Activated naive CD4-positive, alpha-beta T cell treated with anti-CD3 and anti-CD28 coated beads for 36 hours (primary cell): ENCODE measurements at regions of chr11 and their contacts with region 1.

Region 1: GRCh38 chr11:111586388-111586831 is 15.8 kb upstream of the SIK2 start:
- DNase-seq: peak; percentile 69
- H3K4me3 Mint-ChIP-seq: no peak overlapping the region
- H3K27ac Mint-ChIP-seq: no peak overlapping the region
- H3K4me1 Mint-ChIP-seq: no peaks in the 10 kb centered on the region
- H3K27me3 Mint-ChIP-seq: peaks cover 2% of the 10 kb centered on the region

Region 2: DNA sequence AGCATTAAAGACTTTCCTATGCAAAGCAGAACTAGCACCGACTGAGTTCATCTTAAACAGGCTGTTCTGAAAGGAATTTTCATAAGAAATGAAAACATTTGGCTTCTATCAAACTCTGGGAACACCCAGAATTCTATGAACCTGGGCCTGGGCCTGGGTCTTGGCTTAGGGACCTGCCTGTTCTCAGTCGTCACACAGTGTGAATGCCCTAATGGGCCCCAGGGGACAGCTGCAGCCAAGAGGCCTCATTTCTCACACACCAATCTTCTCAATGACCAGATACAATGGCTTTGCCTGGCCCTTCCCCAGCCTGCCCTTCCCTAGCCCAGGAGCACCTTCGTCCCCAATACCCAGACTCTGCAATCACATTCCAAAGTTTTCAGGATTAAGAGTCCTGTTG is 639.3 kb before region 1 on chr11:
- CTCF ChIA-PET with region 1: no interaction called
- intact Hi-C with region 1: no loop called
- DNase-seq: no peak
- H3K4me3 Mint-ChIP-seq: no peak overlapping the region
- H3K27ac Mint-ChIP-seq: no peak overlapping the region
- H3K4me1 Mint-ChIP-seq: no peaks in the 10 kb centered on the region
- H3K27me3 Mint-ChIP-seq: no peaks in the 10 kb centered on the region

Region 3: GRCh38 chr11:111841370-111842053 is 255.1 kb after region 1 on chr11:
- CTCF ChIA-PET with region 1: interaction called, 4 read pairs
- intact Hi-C with region 1: loop called (anchors 1 kb)
- DNase-seq: peak; percentile 96
- H3K4me3 Mint-ChIP-seq: no peak overlapping the region
- H3K27ac Mint-ChIP-seq: no peak overlapping the region
- H3K4me1 Mint-ChIP-seq: no peaks in the 10 kb centered on the region
- H3K27me3 Mint-ChIP-seq: no peaks in the 10 kb centered on the region